ENCODE measurements at regions of chr10 and their contacts with region 1.

Region 1: GRCh38 chr10:4034907-4035598 is 250.0 kb upstream of the KLF6 start:
- DNase-seq: peak; percentile 48
- H3K4me3 Mint-ChIP-seq: peak overlapping the region; percentile 2
- H3K27ac Mint-ChIP-seq: peak overlapping the region; percentile 32
- H3K4me1 Mint-ChIP-seq: peaks cover 33% of the 10 kb centered on the region
- H3K27me3 Mint-ChIP-seq: no peaks in the 10 kb centered on the region

Region 2: DNA sequence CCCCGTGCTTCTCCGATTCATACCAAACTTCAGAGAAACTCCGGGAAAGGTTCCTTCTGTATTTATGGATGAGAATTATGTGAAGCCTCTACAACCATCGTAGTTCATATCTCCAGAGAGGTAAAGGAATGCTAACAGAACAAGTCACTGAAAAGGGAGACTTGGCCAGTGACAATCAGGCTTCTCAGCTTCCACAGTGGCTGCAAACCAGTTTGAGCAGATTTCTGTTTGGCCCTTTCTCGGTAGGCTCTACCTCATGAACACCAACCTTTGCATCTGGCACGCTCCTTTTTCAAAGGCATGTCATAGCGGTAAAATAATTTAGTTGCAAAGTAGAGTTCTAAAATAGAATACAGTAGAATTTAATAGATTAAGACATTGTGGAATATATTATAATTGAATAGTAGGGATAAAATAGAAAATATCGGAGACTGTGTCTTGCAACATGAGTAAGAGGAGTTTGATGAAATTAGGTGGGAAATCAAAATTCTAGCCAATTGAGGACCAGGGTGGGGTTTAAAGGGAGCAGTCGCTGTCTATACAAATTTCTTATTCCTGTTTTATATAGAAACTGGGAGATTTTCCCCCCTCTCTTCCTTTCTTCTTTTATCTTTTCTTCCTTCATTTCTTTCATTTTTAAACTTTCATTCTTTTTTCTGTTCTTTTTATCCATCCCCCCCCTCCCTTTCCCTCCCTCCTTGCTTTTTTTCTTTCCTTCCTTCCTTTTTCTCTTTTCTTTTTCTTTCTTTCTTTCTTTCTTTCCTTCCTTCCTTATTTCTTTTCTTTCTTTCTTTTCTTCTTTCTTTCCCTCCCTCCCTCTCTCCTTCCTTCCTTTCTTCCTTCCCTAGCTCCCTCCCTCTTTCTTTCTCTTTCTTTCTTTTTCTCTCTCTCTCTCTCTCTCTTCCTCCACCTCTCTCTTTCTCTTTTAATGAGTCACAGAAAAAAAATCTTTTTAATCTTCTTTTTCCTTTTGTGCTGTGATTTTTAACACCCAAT is 88.5 kb before region 1 on chr10:
- CTCF ChIA-PET with region 1: no interaction called
- POLR2A ChIA-PET with region 1: no interaction called
- intact Hi-C with region 1: no loop called
- DNase-seq: peak; percentile 18
- H3K4me3 Mint-ChIP-seq: peak overlapping the region; percentile 55
- H3K27ac Mint-ChIP-seq: peak overlapping the region; percentile 79
- H3K4me1 Mint-ChIP-seq: peaks cover 80% of the 10 kb centered on the region
- H3K27me3 Mint-ChIP-seq: no peaks in the 10 kb centered on the region

Region 3: DNA sequence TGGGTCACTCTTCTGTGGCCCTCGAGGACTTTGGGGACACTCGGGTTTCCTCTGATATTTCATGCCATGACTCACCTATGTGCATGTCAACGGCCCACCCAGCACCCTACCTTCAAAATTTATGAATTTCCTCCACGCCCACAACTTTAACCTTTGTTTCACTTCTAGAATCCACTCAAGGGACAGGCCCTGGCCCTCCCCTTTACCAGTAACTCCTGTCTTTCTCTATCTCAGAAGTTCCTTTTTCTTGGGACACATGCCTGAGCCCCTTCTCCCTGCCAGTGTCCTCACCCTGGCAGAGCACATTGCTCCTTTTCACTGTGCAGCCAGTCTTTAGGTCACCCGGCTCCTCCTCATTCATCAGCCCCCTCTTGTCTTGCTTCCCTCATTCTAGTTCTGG is 32.5 kb after region 1 on chr10:
- CTCF ChIA-PET with region 1: interaction called, 3 read pairs
- POLR2A ChIA-PET with region 1: no interaction called
- intact Hi-C with region 1: loop called (anchors 2 kb)
- DNase-seq: peak; percentile 57
- H3K4me3 Mint-ChIP-seq: no peak overlapping the region
- H3K27ac Mint-ChIP-seq: no peak overlapping the region
- H3K4me1 Mint-ChIP-seq: peaks cover 3% of the 10 kb centered on the region
- H3K27me3 Mint-ChIP-seq: no peaks in the 10 kb centered on the region

Measured in activated CD4-positive, alpha-beta memory T cell treated with anti-CD3 and anti-CD28 coated beads for 36 hours (primary cell).